HCT116 (cell line): ENCODE measurements at regions of chr1 and their contacts with region 1.

Region 1: DNA sequence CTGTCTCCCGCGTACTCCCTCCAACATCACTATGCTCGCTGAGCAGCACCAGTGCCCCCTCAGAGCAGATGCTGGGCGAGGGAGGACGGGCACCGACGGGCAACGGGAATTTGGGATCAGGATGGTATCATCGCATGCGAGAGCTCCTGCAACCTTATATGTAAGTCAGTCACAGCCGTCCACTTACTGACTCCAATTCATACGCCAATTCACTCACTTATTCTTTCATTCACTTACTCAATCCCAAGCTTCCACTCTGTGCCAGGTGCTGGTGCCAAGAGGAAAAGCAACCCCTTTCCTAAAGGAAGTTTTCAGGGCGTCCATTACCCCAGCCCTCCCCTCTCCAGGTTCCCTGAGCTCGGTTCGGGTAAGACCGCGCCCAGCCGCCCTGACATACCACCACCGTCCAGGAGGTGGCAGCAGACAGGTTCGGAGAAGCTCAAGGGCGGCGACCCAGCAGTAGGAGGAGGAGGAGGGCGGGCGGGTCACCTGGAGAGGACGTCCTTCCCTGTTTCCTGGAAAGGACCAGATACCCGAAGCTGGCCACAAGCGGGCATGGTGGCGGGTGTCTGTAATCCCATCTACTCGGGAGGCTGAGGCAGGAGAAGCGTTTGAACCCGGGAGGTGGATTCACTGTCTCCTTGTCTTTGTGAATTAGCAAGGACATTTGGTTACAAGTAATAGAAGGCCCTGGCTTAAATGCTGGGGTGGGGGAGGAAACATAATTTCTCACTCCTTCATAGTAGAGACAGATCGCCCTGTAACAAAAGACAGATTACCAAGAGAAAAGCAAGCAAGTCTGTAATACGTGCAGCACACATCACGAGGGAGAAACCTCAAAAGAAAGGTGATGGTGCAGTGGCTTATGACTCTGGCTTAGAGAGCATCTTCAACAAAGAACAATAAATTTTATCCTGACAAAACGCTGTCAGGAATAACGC is 7.6 kb upstream of the IL22RA1 start:
- DNase-seq: peak; percentile 85
- ATAC-seq: peak; percentile 95
- H3K4me3 ChIP-seq: peak overlapping the region; percentile 49 to 64
- H3K27ac ChIP-seq: peak overlapping the region; percentile 4; the same call in 1 of the 2 replicates
- H3K4me1 ChIP-seq: peaks cover 5 to 21% of the 10 kb centered on the region in 2 experiments
- H3K27me3 ChIP-seq: no peaks in the 10 kb centered on the region
- CTCF ChIP-seq: peak; percentile 77 to 86 (median 82)
- POLR2A ChIP-seq: no peak
- RAD21 ChIP-seq: peak; percentile 78

Region 2: GRCh38 chr1:24003331-24003972 is 147.1 kb before region 1 on chr1:
- CTCF ChIA-PET with region 1: no interaction called
- POLR2A ChIA-PET with region 1: no interaction called
- RAD21 ChIA-PET with region 1: no interaction called
- intact Hi-C with region 1: no loop called
- DNase-seq: no peak
- ATAC-seq: no peak
- H3K4me3 ChIP-seq: no peak overlapping the region
- H3K27ac ChIP-seq: no peak overlapping the region
- H3K4me1 ChIP-seq: peaks cover 5 to 9% of the 10 kb centered on the region in 2 experiments; a peak in 2 of 4 replicates
- H3K27me3 ChIP-seq: no peaks in the 10 kb centered on the region
- CTCF ChIP-seq: no peak
- POLR2A ChIP-seq: no peak
- RAD21 ChIP-seq: no peak

Region 3: DNA sequence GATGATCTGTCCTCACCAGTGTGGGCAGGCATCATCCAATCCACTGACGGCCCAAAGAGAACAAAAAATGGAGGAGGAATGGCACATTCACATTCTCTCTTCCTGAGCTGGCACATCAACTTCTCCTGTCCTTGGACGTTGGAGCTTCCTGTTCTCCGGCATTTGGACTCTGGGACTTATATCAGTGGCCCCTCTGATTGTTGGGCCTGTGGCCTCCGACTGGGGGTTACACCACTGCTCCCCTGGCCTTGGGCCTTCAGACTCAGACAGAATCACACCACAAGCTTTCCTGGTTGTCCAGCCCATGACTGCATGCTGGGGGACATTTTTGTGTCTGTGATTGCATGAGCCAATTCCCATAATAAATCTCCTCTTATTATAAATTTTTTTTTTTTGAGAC is 16.5 kb after region 1 on chr1:
- CTCF ChIA-PET with region 1: interaction called, 12 read pairs
- POLR2A ChIA-PET with region 1: no interaction called
- RAD21 ChIA-PET with region 1: no interaction called
- intact Hi-C with region 1: no loop called
- DNase-seq: no peak
- ATAC-seq: no peak
- H3K4me3 ChIP-seq: no peak overlapping the region
- H3K27ac ChIP-seq: no peak overlapping the region
- H3K4me1 ChIP-seq: no peaks in the 10 kb centered on the region
- H3K27me3 ChIP-seq: no peaks in the 10 kb centered on the region
- CTCF ChIP-seq: no peak
- POLR2A ChIP-seq: no peak
- RAD21 ChIP-seq: no peak

Region 4: DNA sequence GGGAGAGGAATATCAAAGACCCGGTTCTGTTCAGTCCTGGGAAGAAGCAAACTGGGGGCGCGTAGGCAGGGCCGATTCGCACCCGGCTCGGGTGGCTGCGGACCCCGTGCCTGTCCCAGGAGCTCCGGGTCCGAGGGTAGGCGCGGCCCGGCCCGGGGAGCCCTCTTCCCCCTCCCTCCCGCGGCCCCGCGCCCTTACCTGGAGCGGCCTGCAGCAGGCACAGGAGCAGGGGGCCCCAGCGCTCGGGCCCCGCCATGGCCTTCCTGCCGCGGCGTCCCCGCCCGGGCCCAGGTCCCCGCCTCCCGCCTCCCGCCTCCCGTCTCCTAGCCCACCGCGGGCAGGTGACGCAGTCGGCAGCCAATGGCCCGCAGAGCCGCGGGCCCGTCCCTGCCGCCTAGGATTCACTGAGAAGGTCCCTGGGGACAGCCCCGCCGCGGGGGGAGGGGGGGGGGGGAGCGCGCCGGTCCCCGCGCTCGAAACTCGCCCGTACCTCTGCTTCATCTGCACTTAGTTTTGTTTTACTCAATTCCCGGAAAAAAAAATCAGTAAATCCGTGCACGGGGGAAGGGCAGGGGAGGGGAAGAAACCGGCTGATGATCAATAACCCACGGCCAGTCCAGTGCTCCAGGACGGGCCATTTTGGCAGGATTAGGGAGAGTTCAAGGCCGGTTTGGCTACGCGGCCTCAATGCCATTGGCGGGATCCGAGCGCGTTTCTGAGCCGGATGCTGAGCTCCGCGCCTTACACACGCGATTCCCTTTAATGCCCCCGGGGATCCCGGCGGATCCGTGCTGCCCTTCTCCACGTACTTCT is 36.7 kb after region 1 on chr1 and contains the start of gene IFNLR1:
- CTCF ChIA-PET with region 1: interaction called, 13 read pairs
- POLR2A ChIA-PET with region 1: interaction called, 4 read pairs
- RAD21 ChIA-PET with region 1: no interaction called
- intact Hi-C with region 1: no loop called
- DNase-seq: peak; percentile 58
- ATAC-seq: peak; percentile 95
- H3K4me3 ChIP-seq: peak within 1 kb of the TSS; percentile 51 to 62
- H3K27ac ChIP-seq: peak within 1 kb of the TSS; percentile 54; the same call in 1 of the 2 replicates
- H3K4me1 ChIP-seq: peaks cover 15 to 35% of the 10 kb centered on the region in 2 experiments; a peak in 3 of 4 replicates
- H3K27me3 ChIP-seq: no peaks in the 10 kb centered on the region
- CTCF ChIP-seq: no peak
- POLR2A ChIP-seq: peak; percentile 18
- RAD21 ChIP-seq: no peak
- total RNA-seq, gene IFNLR1: 7.6 TPM

Region 5: DNA sequence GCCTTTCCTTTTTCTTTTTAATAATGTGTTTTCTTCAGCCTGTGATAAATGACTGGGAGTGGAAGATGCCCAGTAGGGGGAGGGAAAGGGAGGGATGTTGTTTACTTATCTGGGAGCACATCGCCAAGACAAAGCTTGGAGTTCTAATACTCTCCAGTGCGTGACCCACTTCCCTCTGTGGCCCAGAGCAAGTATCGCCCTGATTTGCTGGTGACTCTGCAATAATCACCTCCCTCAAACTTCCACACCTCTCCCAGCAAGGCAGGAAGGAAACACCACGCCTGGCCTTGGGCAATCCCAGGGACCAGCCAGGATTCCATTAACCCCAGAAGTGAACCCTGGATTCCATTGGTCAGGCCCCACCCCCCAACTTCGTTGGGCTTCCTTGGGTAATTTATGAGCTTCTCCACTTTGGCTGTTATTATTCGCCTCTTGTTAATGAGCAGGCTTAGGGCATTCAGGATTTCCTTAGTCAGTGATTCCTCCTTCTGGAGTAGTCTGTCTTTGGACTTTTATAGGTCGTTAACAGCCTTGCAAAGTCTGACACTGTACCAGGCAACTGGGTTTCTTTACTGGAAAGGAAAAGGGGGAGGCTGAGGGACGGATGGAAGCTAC is 144.4 kb after region 1 on chr1:
- CTCF ChIA-PET with region 1: no interaction called
- POLR2A ChIA-PET with region 1: no interaction called
- RAD21 ChIA-PET with region 1: no interaction called
- intact Hi-C with region 1: no loop called
- DNase-seq: no peak
- ATAC-seq: 0 out of 2 replicates have a peak, but pooled peaks have one; percentile 16
- H3K4me3 ChIP-seq: no peak overlapping the region
- H3K27ac ChIP-seq: no peak overlapping the region
- H3K4me1 ChIP-seq: peaks cover 15 to 42% of the 10 kb centered on the region in 2 experiments
- H3K27me3 ChIP-seq: peaks cover 9% of the 10 kb centered on the region; the same call in 1 of the 2 replicates
- CTCF ChIP-seq: no peak
- POLR2A ChIP-seq: no peak
- RAD21 ChIP-seq: no peak

Region 6: GRCh38 chr1:24463776-24464735 is 313.6 kb after region 1 on chr1:
- CTCF ChIA-PET with region 1: no interaction called
- POLR2A ChIA-PET with region 1: no interaction called
- RAD21 ChIA-PET with region 1: no interaction called
- intact Hi-C with region 1: no loop called
- DNase-seq: no peak
- ATAC-seq: no peak
- H3K4me3 ChIP-seq: no peak overlapping the region
- H3K27ac ChIP-seq: no peak overlapping the region
- H3K4me1 ChIP-seq: peaks cover 0 to 8% of the 10 kb centered on the region in 2 experiments; a peak in 2 of 4 replicates
- H3K27me3 ChIP-seq: no peaks in the 10 kb centered on the region
- CTCF ChIP-seq: no peak
- POLR2A ChIP-seq: no peak
- RAD21 ChIP-seq: no peak